ENCODE measurements at regions of chr17 and their contacts with region 1.

Region 1: GRCh38 chr17:39164675-39165143 is 1.3 kb downstream of the ARL5C start:
- DNase-seq: peak; percentile 91 to 99
- ATAC-seq: peak; percentile 81 to 92
- H3K4me3 ChIP-seq: peak overlapping the region; percentile 16; the same call in 2 of the 3 replicates
- H3K27ac ChIP-seq: peak overlapping the region in 1 of 2 experiments; percentile 51; a peak in 3 of 6 replicates
- H3K4me1 ChIP-seq: peaks cover 6% of the 10 kb centered on the region; the same call in 2 of the 3 replicates
- CTCF ChIP-seq: peak; percentile 84
- EP300 ChIP-seq: no peak
- POLR2A ChIP-seq: no peak
- RAD21 ChIP-seq: peak; percentile 42 to 61; a peak in 3 of 5 replicates

Region 2: GRCh38 chr17:39186481-39187002 is 21.8 kb after region 1 on chr17:
- CTCF ChIA-PET with region 1: interaction called, 612 read pairs
- POLR2A ChIA-PET with region 1: no interaction called
- DNase-seq: no peak
- ATAC-seq: no peak
- H3K4me3 ChIP-seq: no peak overlapping the region
- H3K27ac ChIP-seq: no peak overlapping the region
- H3K4me1 ChIP-seq: no peaks in the 10 kb centered on the region
- CTCF ChIP-seq: no peak
- EP300 ChIP-seq: no peak
- POLR2A ChIP-seq: no peak
- RAD21 ChIP-seq: no peak

Region 3: GRCh38 chr17:39194089-39194984 is 29.6 kb after region 1 on chr17:
- CTCF ChIA-PET with region 1: interaction called, 28 read pairs
- POLR2A ChIA-PET with region 1: interaction called, 21 read pairs
- DNase-seq: peak; percentile 73 to 84
- ATAC-seq: peak; percentile 44 to 63
- H3K4me3 ChIP-seq: no peak overlapping the region
- H3K27ac ChIP-seq: peak overlapping the region in 1 of 2 experiments; percentile 96; a peak in 1 of 6 replicates
- H3K4me1 ChIP-seq: peaks cover 35% of the 10 kb centered on the region
- CTCF ChIP-seq: peak; percentile 33; the same call in 2 of the 3 replicates
- EP300 ChIP-seq: no peak
- POLR2A ChIP-seq: no peak
- RAD21 ChIP-seq: peak in 1 of 2 experiments; percentile 36; a peak in 1 of 5 replicates

Region 4: DNA sequence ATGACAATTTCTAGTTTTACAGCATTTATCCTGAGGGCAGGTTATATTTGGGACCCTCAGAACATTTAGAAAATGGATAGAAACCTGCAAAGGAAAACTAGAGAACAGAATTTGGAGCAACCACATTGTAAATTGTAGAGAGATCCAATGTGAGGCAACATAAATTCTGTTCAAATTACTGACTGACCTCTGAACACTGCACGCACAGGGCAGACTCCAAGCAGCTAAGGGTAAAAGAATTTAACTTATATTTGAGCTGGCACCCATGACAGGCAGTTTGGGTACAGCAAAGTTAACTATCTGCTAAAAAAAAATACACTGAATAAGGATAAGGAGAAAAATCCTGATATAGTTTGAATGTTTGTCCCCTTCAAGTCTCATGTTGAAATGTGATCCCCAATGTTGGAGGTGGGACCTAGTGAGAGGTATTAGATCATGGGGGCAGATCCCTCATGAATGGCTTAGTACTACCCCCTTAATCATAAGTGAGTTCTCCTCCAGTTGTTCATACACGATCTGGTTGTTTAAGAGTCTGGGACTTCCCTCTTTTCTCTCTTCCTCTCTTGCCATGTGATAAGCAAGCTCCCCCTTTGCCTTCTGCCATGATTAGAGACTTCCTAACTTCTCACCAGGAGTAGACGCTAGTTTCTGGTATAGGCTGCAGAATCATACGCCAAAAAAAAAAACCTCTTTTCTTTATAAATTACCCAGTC is 161.0 kb after region 1 on chr17:
- CTCF ChIA-PET with region 1: no interaction called
- POLR2A ChIA-PET with region 1: no interaction called
- DNase-seq: no peak
- ATAC-seq: no peak
- H3K4me3 ChIP-seq: no peak overlapping the region
- H3K27ac ChIP-seq: no peak overlapping the region
- H3K4me1 ChIP-seq: 0 out of 3 replicates have a peak, but pooled peaks cover 11% of the 10 kb centered on the region
- CTCF ChIP-seq: no peak
- EP300 ChIP-seq: no peak
- POLR2A ChIP-seq: no peak
- RAD21 ChIP-seq: no peak

Measured in A549 (cell line).